ENCODE measurements at regions of chr16 and their contacts with region 1.

Region 1: GRCh38 chr16:30698139-30698815 is 694 bp upstream of the SRCAP start:
- DNase-seq: peak; percentile 96
- ATAC-seq: peak; percentile 75
- H3K4me3 Mint-ChIP-seq: peak overlapping the region; percentile 97
- H3K27ac Mint-ChIP-seq: peak overlapping the region; percentile 100
- H3K4me1 Mint-ChIP-seq: peaks cover 30% of the 10 kb centered on the region
- H3K27me3 Mint-ChIP-seq: no peaks in the 10 kb centered on the region
- CTCF ChIP-seq: no peak

Region 2: DNA sequence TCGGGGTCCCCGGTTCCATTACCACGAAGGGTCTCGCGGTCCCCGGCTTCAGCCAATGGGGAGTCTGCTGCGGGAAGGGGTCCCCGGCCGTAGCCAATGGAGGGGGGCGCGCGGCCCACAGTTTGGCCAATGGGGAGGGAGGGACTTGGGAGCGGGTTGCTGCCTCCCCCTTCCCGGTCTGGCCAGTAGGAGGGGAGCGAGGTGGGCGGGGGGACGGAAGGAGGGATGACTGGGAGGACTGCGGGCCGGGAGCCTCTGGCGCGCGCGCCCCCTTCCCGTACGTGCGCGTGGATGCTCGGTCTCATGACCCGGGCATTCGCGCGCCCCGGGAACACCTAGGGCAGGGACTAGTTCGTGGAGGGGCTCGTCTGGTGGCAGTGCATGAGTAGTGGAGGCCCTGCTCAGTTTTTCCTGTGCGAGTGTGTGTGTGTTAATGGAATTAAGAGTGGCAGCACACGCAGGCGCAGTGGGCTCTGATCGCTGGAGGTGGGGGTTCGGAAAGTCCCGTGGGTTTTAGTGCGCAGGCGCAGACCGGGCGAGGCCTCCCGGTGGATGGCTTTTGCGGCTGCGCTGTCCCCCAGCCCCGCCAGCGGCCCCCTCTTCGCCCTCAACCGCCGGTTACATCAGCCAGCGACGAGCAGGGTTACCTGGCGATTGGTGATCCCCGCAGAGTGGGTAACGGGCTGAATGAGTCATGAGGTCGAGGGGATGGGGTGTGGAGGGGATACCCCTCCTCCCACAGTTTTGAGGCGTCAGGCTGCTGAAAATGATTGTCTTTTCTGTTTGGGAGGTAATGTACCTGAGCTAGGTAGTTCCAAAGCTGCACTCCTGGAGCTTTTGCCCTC is 1874.2 kb before region 1 on chr16:
- CTCF ChIA-PET with region 1: no interaction called
- POLR2A ChIA-PET with region 1: interaction called, 17 read pairs
- intact Hi-C with region 1: no loop called
- DNase-seq: peak; percentile 92
- ATAC-seq: peak; percentile 77
- H3K4me3 Mint-ChIP-seq: peak overlapping the region; percentile 98
- H3K27ac Mint-ChIP-seq: peak overlapping the region; percentile 99
- H3K4me1 Mint-ChIP-seq: peaks cover 43% of the 10 kb centered on the region
- H3K27me3 Mint-ChIP-seq: no peaks in the 10 kb centered on the region
- CTCF ChIP-seq: no peak

Region 3: DNA sequence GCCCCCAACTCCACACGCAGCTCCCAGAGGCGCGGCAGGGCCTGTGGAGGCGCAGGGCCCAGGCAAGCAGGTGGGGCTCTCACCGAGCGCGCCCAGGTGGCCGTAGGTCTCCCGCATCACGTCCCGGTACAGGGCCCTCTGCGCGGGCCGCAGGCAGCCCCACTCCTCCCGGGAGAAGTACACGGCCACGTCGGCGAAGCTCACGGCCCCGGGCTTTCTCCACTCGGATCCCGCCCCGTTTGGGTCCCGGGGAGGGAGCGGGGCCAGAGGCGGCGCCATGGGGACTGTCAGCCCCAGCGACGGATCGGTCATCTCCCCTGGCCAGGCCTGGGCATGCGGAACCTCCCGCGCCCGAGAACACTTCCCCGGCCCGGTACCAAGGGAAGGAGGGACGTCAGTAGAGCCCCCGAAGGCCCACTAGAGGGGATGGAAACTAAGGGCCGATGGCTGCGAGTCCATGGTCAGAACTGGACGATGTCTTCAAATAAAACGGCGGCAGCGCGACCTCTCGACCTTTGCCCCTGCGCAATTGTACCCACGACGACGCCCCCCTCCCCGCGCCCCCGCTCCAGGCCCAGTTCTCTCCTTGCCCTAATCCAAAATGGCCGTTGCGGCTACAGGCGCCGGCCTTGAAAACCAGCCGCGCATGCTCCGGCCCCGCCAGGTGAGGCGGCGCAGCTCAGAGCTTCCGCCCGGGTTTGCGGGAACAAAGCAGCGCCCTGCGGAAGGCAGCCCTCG is 163.7 kb before region 1 on chr16 and contains the start of gene ZNF747:
- CTCF ChIA-PET with region 1: interaction called, 3 read pairs
- POLR2A ChIA-PET with region 1: interaction called, 11 read pairs
- intact Hi-C with region 1: loop called (anchors 2 kb)
- DNase-seq: peak; percentile 85
- ATAC-seq: peak; percentile 83
- H3K4me3 Mint-ChIP-seq: peak within 1 kb of the TSS; percentile 96
- H3K27ac Mint-ChIP-seq: peak within 1 kb of the TSS; percentile 97
- H3K4me1 Mint-ChIP-seq: peaks cover 23% of the 10 kb centered on the region
- H3K27me3 Mint-ChIP-seq: no peaks in the 10 kb centered on the region
- CTCF ChIP-seq: no peak
- total RNA-seq, gene ZNF747: 16.3 and 21.6 TPM in 2 replicates

Region 4: DNA sequence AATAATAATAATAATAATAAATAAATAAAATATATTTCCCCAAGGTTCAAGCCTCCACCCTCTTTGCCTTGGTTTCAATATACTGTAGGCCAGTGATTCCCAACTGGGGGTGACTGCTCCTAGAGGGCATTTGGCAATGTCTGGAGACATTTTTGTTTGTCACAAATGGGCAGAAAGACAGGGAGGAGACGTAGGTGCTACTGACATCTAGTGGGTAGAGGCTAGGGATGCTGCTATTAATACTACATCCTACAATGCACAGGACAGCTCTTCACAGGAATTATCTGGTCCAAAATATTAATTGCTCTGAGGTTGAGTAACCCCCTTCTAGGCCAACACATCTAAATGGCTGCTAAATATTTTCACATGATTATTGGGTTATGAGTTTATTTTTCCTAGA is 60.3 kb before region 1 on chr16:
- CTCF ChIA-PET with region 1: no interaction called
- POLR2A ChIA-PET with region 1: interaction called, 17 read pairs
- intact Hi-C with region 1: loop called (anchors 1 kb)
- DNase-seq: no peak
- ATAC-seq: no peak
- H3K4me3 Mint-ChIP-seq: no peak overlapping the region
- H3K27ac Mint-ChIP-seq: no peak overlapping the region
- H3K4me1 Mint-ChIP-seq: peaks cover 21% of the 10 kb centered on the region
- H3K27me3 Mint-ChIP-seq: no peaks in the 10 kb centered on the region
- CTCF ChIP-seq: no peak

Region 5: DNA sequence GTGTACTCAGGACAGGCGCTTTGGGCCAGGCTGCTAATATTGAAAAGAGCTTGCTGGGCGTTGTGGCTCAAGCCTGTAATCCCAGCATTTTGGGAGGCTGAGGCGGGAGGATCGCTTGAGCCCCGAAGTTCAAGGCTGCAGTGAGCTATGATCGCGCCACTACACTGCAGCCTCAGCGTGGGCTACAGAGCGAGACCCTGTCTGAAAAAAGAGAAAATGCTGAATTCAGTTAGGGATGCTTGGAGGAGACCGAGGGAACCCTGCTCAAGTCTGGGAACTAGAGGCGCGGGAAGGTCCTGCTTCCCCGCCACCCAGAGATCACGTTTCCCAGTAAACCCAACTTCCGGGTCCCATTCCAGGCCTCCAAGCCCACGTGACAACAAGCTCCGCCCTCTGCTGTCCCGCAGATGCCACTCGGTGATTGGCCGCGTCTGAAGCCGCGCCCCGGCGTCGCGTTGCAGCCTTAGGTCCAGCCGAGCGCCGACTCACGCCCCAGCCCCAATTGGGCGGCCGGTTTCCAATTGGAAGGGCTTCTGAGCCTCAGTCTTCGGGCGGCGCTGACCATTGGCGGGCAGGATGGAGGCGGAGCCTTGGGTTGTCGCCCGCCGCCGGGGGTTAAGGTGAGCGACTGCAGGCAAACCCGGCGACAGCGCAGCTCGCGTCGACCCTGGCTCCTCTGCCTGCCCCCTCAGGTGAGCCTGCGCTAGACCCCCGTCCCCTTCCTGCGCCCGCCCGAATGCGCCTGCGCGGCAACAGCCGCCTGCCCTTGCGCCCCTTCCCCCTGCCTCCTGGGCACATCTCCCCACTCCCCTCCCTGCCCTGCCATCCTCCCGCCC is 49.7 kb after region 1 on chr16 and contains the start of gene PHKG2:
- CTCF ChIA-PET with region 1: no interaction called
- POLR2A ChIA-PET with region 1: interaction called, 3 read pairs
- intact Hi-C with region 1: loop called (anchors 1 kb)
- DNase-seq: peak; percentile 90
- ATAC-seq: peak; percentile 98
- H3K4me3 Mint-ChIP-seq: peak within 1 kb of the TSS; percentile 91
- H3K27ac Mint-ChIP-seq: peak within 1 kb of the TSS; percentile 87
- H3K4me1 Mint-ChIP-seq: peaks cover 24% of the 10 kb centered on the region
- H3K27me3 Mint-ChIP-seq: no peaks in the 10 kb centered on the region
- CTCF ChIP-seq: no peak
- total RNA-seq, gene PHKG2: 45.3 and 51.4 TPM in 2 replicates

Region 6: GRCh38 chr16:30874821-30875717 is 176.8 kb after region 1 on chr16:
- CTCF ChIA-PET with region 1: no interaction called
- POLR2A ChIA-PET with region 1: interaction called, 3 read pairs
- intact Hi-C with region 1: loop called (anchors 1 kb)
- DNase-seq: peak; percentile 90
- ATAC-seq: peak; percentile 83
- H3K4me3 Mint-ChIP-seq: peak overlapping the region; percentile 94
- H3K27ac Mint-ChIP-seq: peak overlapping the region; percentile 95
- H3K4me1 Mint-ChIP-seq: peaks cover 37% of the 10 kb centered on the region
- H3K27me3 Mint-ChIP-seq: no peaks in the 10 kb centered on the region
- CTCF ChIP-seq: no peak